ENCODE measurements at regions of chr12 and their contacts with region 1.

Region 1: DNA sequence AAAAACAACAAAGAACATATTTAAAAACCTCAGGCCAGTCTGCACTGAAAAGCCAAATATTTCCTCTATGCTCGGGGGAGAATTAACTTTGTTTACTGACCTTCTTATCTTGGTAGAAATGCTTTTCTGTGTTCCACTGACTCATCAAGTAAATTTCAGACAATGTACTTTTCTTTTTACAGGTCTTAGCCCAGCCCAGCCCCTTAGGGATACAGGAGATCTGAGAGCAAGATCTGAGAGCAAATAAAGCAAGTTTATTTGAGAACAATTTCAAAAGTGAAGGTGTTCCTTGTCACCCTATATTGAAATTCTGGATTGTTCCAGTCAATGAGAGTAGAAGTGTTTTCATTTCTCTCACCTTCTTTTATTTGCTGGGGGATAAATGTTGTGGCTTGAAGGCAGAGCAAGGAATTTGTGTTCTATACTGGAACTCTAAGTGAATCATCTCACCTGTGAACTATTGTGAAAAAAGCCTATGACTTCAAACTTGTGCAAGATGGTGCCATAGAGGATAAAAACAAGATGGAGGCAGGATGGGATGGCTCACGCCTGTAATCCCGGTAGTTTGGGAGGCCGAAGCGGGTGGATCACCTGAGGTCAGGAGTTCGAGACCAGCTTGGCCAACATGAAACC is 7.9 kb upstream of the GPRC5A start:
- DNase-seq: peak; percentile 88
- ATAC-seq: peak; percentile 65
- H3K4me3 ChIP-seq: 0 out of 2 replicates have a peak overlapping the region, but pooled peaks have one; percentile 46
- H3K27ac ChIP-seq: peak overlapping the region; percentile 90
- H3K4me1 ChIP-seq: peaks cover 55% of the 10 kb centered on the region
- H3K27me3 ChIP-seq: no peaks in the 10 kb centered on the region
- CTCF ChIP-seq: no peak

Region 2: DNA sequence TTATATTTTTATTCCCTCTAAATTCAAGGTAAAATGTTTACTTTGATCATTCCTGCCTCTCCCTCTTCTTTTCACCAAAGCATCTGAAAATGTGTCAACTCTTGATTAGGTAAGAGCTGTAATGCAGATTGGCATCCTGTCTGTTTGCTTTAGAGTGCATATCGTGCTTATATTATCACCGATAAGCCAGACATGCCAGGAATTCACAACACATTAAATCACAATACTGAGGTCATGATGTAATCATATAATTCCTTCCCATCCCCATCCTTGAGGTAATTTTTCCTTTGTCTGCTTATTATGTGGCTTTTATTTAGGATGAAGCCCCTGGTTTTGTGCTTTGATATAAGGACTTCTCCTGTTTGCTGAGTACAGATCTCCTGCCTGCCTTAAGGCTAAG is 60.2 kb before region 1 on chr12:
- CTCF ChIA-PET with region 1: no interaction called
- POLR2A ChIA-PET with region 1: no interaction called
- intact Hi-C with region 1: no loop called
- DNase-seq: peak; percentile 52
- ATAC-seq: no peak
- H3K4me3 ChIP-seq: no peak overlapping the region
- H3K27ac ChIP-seq: peak overlapping the region; percentile 6; the same call in 1 of the 2 replicates
- H3K4me1 ChIP-seq: peaks cover 50% of the 10 kb centered on the region
- H3K27me3 ChIP-seq: no peaks in the 10 kb centered on the region
- CTCF ChIP-seq: no peak

Region 3: GRCh38 chr12:12872139-12872881 is 11.2 kb before region 1 on chr12:
- CTCF ChIA-PET with region 1: no interaction called
- POLR2A ChIA-PET with region 1: interaction called, 5 read pairs
- intact Hi-C with region 1: loop called (anchors 1 kb)
- DNase-seq: peak; percentile 96
- ATAC-seq: peak; percentile 70
- H3K4me3 ChIP-seq: peak overlapping the region; percentile 47; the same call in 1 of the 2 replicates
- H3K27ac ChIP-seq: peak overlapping the region; percentile 99
- H3K4me1 ChIP-seq: peaks cover 58% of the 10 kb centered on the region
- H3K27me3 ChIP-seq: no peaks in the 10 kb centered on the region
- CTCF ChIP-seq: no peak

Measured in PC-3 (cell line).